ENCODE measurements at regions of chr17 and their contacts with region 1.

Region 1: DNA sequence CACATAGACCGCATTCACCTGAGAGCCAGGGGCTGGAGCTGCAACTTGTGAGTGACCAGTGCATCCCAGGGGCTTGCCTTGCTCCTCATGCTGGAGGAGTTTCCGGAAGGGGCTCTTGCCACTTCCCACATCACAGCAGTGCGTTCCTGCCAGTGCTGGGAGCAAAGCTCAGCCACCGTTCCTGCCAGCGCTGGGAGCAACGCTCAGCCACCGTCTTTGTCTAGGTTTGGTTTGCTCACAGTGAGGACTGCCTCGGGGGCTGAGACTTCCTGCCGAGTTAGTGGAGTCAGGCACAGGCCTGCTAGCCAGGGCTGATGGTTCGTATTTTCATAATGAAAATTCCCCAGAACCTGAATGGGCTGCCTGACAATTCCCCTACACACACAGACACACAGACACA is 5.4 kb upstream of the CHRNE start:
- DNase-seq: no peak
- ATAC-seq: peak; percentile 20
- H3K4me3 Mint-ChIP-seq: no peak overlapping the region
- H3K27ac Mint-ChIP-seq: no peak overlapping the region
- H3K4me1 Mint-ChIP-seq: peaks cover 6% of the 10 kb centered on the region
- H3K27me3 Mint-ChIP-seq: no peaks in the 10 kb centered on the region

Region 2: GRCh38 chr17:4759776-4760236 is 148.5 kb before region 1 on chr17:
- CTCF ChIA-PET with region 1: no interaction called
- DNase-seq: no peak
- ATAC-seq: no peak
- H3K4me3 Mint-ChIP-seq: no peak overlapping the region
- H3K27ac Mint-ChIP-seq: no peak overlapping the region
- H3K4me1 Mint-ChIP-seq: no peaks in the 10 kb centered on the region
- H3K27me3 Mint-ChIP-seq: peaks cover 35% of the 10 kb centered on the region

Region 3: DNA sequence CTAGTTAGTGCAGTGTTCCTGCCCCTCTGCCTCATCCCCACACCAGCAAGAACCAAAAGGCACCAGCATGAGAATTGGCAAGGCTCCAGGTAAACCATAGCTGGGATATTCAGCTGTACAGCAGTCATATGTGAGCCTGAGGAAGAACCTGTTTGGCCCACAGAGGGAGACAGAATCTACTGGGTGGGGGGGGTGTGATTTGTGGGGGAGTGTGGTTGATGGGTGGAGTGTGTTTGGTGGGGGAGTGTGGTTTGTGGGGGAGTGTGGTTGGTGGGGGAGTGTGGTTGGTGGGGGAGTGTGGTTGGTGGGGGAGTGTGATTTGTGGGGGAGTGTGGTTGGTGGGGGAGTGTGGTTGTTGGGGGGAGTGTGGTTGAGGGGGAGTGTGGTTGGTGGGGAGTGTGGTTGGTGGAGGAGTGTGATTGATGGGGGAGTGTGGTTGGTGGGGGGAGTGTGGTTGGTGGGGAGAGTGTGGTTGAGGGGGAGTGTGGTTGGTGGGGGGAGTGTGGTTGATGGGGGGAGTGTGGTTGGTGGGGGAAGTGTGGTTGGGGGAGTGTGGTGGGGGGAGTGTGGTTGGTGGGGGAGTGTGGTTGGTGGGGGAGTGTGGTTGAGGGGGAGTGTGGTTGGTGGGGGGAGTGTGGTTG is 55.6 kb before region 1 on chr17:
- CTCF ChIA-PET with region 1: no interaction called
- DNase-seq: no peak
- ATAC-seq: peak; percentile 12
- H3K4me3 Mint-ChIP-seq: no peak overlapping the region
- H3K27ac Mint-ChIP-seq: peak overlapping the region; percentile 71
- H3K4me1 Mint-ChIP-seq: peaks cover 13% of the 10 kb centered on the region
- H3K27me3 Mint-ChIP-seq: peaks cover 4% of the 10 kb centered on the region

Region 4: GRCh38 chr17:4920351-4921048 is 12.2 kb after region 1 on chr17:
- CTCF ChIA-PET with region 1: interaction called, 12 read pairs
- DNase-seq: no peak
- ATAC-seq: no peak
- H3K4me3 Mint-ChIP-seq: no peak overlapping the region
- H3K27ac Mint-ChIP-seq: no peak overlapping the region
- H3K4me1 Mint-ChIP-seq: no peaks in the 10 kb centered on the region
- H3K27me3 Mint-ChIP-seq: no peaks in the 10 kb centered on the region

Region 5: GRCh38 chr17:4956493-4957061 is 48.3 kb after region 1 on chr17:
- CTCF ChIA-PET with region 1: interaction called, 13 read pairs
- DNase-seq: no peak
- ATAC-seq: no peak
- H3K4me3 Mint-ChIP-seq: no peak overlapping the region
- H3K27ac Mint-ChIP-seq: no peak overlapping the region
- H3K4me1 Mint-ChIP-seq: peaks cover under 1% of the 10 kb centered on the region
- H3K27me3 Mint-ChIP-seq: no peaks in the 10 kb centered on the region

Region 6: GRCh38 chr17:4980644-4981216 is 72.4 kb after region 1 on chr17:
- CTCF ChIA-PET with region 1: interaction called, 15 read pairs
- DNase-seq: peak; percentile 56
- ATAC-seq: peak; percentile 85
- H3K4me3 Mint-ChIP-seq: no peak overlapping the region
- H3K27ac Mint-ChIP-seq: peak overlapping the region; percentile 61
- H3K4me1 Mint-ChIP-seq: peaks cover 19% of the 10 kb centered on the region
- H3K27me3 Mint-ChIP-seq: no peaks in the 10 kb centered on the region

Region 7: DNA sequence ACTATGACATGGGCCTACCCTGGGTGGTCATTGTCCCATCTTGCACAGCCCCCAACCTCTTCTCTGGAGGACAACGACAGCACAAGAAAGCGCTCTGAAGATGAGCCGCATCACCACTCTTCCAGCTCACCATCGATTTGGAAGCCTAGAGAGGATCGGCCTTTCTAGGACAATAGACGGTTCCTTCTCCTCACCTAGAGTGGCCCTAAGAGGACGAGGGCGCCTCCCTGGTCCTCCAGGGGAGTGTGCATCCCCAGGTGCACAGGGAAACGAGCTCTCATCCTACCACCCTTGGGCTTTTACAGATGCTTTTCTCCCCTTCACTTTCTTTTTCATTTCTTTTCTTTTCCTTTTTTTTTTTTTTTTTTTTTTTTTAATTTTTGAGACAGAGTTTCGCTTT is 147.2 kb after region 1 on chr17:
- CTCF ChIA-PET with region 1: interaction called, 28 read pairs
- DNase-seq: no peak
- ATAC-seq: no peak
- H3K4me3 Mint-ChIP-seq: no peak overlapping the region
- H3K27ac Mint-ChIP-seq: no peak overlapping the region
- H3K4me1 Mint-ChIP-seq: peaks cover 2% of the 10 kb centered on the region
- H3K27me3 Mint-ChIP-seq: no peaks in the 10 kb centered on the region